B cell (primary cell): ENCODE measurements at regions of chr6 and their contacts with region 1.

Region 1: DNA sequence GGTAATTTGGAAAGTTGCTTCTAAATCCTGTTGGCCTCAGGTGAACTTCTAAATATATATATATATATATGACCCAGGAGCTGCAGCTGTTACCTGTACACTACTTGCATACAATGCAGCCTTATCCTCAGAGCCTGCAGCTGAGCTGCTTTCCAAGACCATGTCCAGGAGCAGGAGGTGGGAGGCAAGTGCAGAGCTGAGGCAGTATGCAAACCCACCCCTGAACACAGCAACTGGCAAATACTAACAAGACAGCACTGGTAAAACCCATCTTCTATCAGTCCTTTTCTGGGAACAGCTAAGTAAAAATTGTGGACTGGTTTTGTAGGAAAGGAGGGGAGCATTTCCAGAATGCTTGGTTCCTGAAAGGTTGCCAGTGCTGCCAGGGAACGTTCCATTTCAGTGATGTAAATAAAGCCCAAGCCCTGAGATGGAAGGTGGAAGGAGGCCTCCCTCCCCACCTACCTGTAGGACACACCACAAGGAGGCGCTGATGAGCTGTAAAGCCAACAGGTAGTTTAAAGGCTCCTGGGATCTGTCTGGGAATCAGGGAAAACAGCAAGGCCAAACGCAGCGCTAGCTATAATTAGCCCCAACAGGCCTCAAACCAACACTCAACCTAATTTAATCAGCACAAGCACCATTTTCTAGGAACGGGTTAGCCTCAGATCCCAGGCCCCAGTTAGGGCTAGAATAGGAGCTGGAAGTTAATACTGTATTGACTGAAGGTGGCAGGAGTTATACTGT is 93.8 kb upstream of the MAP7 start:
- DNase-seq: peak; percentile 83
- ATAC-seq: peak; percentile 83
- H3K4me3 ChIP-seq: no peak overlapping the region
- H3K4me3 Mint-ChIP-seq: no peak overlapping the region
- H3K27ac ChIP-seq: no peak overlapping the region
- H3K27ac Mint-ChIP-seq: peak overlapping the region; percentile 29
- H3K4me1 ChIP-seq: peaks cover 7 to 10% of the 10 kb centered on the region in 2 donors
- H3K4me1 Mint-ChIP-seq: peaks cover 8% of the 10 kb centered on the region
- H3K27me3 ChIP-seq: no peaks in the 10 kb centered on the region
- H3K27me3 Mint-ChIP-seq: no peaks in the 10 kb centered on the region
- CTCF ChIP-seq: peak; percentile 94

Region 2: DNA sequence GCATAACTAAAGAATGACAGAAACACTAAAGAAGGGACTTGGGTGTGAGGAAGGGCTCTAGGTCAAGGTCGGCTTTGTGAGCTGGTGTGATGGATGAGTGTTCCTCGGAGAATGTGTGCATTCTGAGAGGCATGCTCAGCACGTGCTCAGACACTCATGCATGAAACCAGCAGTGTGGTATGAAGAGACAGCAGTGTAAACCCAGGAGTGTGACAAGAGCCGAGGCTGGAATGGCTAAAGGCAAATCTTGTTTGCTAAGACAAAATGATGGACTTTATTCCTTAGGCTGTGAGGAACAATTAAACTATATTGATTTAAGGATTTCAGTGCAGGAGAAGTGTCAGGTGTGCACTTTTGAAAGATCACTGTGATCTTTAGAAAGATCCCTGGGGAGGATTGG is 13.6 kb after region 1 on chr6:
- CTCF ChIA-PET with region 1: interaction called, 14 read pairs
- POLR2A ChIA-PET with region 1: no interaction called
- intact Hi-C with region 1: no loop called
- DNase-seq: no peak
- ATAC-seq: no peak
- H3K4me3 ChIP-seq: no peak overlapping the region
- H3K4me3 Mint-ChIP-seq: no peak overlapping the region
- H3K27ac ChIP-seq: no peak overlapping the region
- H3K27ac Mint-ChIP-seq: no peak overlapping the region
- H3K4me1 ChIP-seq: no peaks in the 10 kb centered on the region
- H3K4me1 Mint-ChIP-seq: no peaks in the 10 kb centered on the region
- H3K27me3 ChIP-seq: no peaks in the 10 kb centered on the region
- H3K27me3 Mint-ChIP-seq: no peaks in the 10 kb centered on the region
- CTCF ChIP-seq: no peak

Region 3: DNA sequence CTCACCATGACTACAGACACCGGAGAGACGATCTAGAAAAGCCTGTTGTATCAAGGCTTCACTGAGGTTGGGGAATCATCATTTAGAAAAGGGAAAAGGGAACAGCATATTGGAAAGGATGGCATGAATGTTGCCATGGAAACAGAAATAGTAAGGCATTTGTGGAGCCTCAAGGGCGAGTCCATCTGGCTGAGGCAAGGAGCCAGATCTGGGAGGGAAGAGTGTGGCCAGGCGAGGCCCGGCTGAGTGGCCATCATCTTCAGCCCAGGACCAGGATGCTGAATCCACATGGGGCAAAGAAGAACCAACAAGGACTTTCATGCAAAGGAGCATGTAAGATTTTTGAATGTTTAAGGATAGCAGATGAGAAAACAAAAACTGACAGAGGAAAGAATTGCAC is 62.4 kb after region 1 on chr6:
- CTCF ChIA-PET with region 1: interaction called, 11 read pairs
- POLR2A ChIA-PET with region 1: no interaction called
- intact Hi-C with region 1: no loop called
- DNase-seq: no peak
- ATAC-seq: no peak
- H3K4me3 ChIP-seq: no peak overlapping the region
- H3K4me3 Mint-ChIP-seq: no peak overlapping the region
- H3K27ac ChIP-seq: no peak overlapping the region
- H3K27ac Mint-ChIP-seq: no peak overlapping the region
- H3K4me1 ChIP-seq: peaks cover 3 to 8% of the 10 kb centered on the region in 2 donors
- H3K4me1 Mint-ChIP-seq: peaks cover 18% of the 10 kb centered on the region
- H3K27me3 ChIP-seq: no peaks in the 10 kb centered on the region
- H3K27me3 Mint-ChIP-seq: no peaks in the 10 kb centered on the region
- CTCF ChIP-seq: no peak

Region 4: GRCh38 chr6:136737871-136738691 is 94.1 kb after region 1 on chr6:
- CTCF ChIA-PET with region 1: interaction called, 32 read pairs
- POLR2A ChIA-PET with region 1: no interaction called
- intact Hi-C with region 1: no loop called
- DNase-seq: no peak
- ATAC-seq: no peak
- H3K4me3 ChIP-seq: no peak overlapping the region
- H3K4me3 Mint-ChIP-seq: no peak overlapping the region
- H3K27ac ChIP-seq: no peak overlapping the region
- H3K27ac Mint-ChIP-seq: no peak overlapping the region
- H3K4me1 ChIP-seq: peaks cover 0 to 2% of the 10 kb centered on the region in 2 donors
- H3K4me1 Mint-ChIP-seq: peaks cover 46% of the 10 kb centered on the region
- H3K27me3 ChIP-seq: no peaks in the 10 kb centered on the region
- H3K27me3 Mint-ChIP-seq: no peaks in the 10 kb centered on the region
- CTCF ChIP-seq: no peak

Region 5: GRCh38 chr6:136803608-136804007 is 159.6 kb after region 1 on chr6:
- CTCF ChIA-PET with region 1: interaction called, 16 read pairs
- POLR2A ChIA-PET with region 1: no interaction called
- intact Hi-C with region 1: no loop called
- DNase-seq: no peak
- ATAC-seq: no peak
- H3K4me3 ChIP-seq: no peak overlapping the region
- H3K4me3 Mint-ChIP-seq: no peak overlapping the region
- H3K27ac ChIP-seq: no peak overlapping the region
- H3K27ac Mint-ChIP-seq: no peak overlapping the region
- H3K4me1 ChIP-seq: no peaks in the 10 kb centered on the region
- H3K4me1 Mint-ChIP-seq: no peaks in the 10 kb centered on the region
- H3K27me3 ChIP-seq: peaks cover 0 to 5% (median 0%) of the 10 kb centered on the region in 4 experiments
- H3K27me3 Mint-ChIP-seq: peaks cover 3% of the 10 kb centered on the region
- CTCF ChIP-seq: no peak

Region 6: DNA sequence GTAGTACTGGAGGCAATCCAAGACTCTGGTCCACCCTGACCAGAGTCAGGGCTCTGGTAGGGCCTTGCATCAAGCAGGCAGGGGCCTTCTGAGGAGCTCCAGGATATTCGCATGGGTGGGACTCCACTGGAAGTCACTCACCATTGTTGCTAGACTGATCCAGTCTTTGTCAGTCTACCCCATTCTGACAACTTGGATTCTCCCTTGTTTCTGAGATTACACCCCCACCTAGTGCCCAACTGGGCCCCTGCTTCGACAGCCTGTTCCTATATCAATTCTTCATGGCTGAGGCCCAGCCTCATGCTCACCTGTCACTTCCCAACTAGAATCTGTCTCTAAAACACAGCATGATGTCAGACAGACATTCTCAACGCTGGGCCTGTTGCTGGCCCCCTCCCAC is 283.3 kb after region 1 on chr6:
- CTCF ChIA-PET with region 1: interaction called, 17 read pairs
- POLR2A ChIA-PET with region 1: no interaction called
- intact Hi-C with region 1: loop called (anchors 1 kb)
- DNase-seq: peak; percentile 22
- ATAC-seq: peak; percentile 33
- H3K4me3 ChIP-seq: no peak overlapping the region
- H3K4me3 Mint-ChIP-seq: no peak overlapping the region
- H3K27ac ChIP-seq: no peak overlapping the region
- H3K27ac Mint-ChIP-seq: no peak overlapping the region
- H3K4me1 ChIP-seq: peaks cover 17 to 18% of the 10 kb centered on the region in 2 donors
- H3K4me1 Mint-ChIP-seq: peaks cover 15% of the 10 kb centered on the region
- H3K27me3 ChIP-seq: peaks cover 0 to 36% (median 20%) of the 10 kb centered on the region in 4 experiments
- H3K27me3 Mint-ChIP-seq: peaks cover 33% of the 10 kb centered on the region
- CTCF ChIP-seq: peak; percentile 11